A549 (cell line): ENCODE measurements at regions of chr2 and their contacts with region 1.

Region 1: DNA sequence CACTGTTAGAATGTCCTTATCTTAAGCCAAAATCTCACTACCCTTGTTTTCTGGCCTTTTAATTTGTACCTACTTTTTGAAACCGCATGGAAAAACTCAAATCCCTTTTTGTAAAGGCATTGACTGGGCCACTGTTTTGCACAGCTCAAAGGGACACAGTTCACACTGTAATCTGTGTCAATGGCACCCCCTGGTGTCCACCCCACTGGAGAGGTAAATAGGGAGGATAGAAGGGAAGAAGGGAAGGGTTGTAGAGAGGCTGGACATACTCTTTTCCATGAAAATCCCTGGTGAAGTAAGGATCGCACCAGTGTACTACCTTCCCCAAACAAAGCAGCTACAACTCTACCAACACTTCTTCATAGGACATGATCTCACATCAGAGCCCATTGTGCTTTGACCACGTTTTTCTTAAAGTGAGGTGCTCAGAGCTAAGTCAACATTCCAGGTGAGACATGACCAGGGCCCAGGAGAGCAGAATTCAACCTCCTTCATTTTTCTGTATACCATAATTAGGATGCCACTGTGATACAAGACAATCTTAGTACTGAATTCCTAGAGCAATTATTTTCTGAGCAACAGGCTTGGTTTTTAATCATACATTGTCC is 92.4 kb upstream of the RMDN2 start:
- DNase-seq: peak; percentile 84 to 88
- ATAC-seq: peak; percentile 99
- H3K4me3 ChIP-seq: no peak overlapping the region
- H3K27ac ChIP-seq: peak overlapping the region; percentile 41 to 43; a peak in 2 of 6 replicates
- H3K4me1 ChIP-seq: peaks cover 20% of the 10 kb centered on the region
- CTCF ChIP-seq: peak; percentile 99
- EP300 ChIP-seq: no peak
- POLR2A ChIP-seq: no peak
- RAD21 ChIP-seq: peak; percentile 100

Region 2: DNA sequence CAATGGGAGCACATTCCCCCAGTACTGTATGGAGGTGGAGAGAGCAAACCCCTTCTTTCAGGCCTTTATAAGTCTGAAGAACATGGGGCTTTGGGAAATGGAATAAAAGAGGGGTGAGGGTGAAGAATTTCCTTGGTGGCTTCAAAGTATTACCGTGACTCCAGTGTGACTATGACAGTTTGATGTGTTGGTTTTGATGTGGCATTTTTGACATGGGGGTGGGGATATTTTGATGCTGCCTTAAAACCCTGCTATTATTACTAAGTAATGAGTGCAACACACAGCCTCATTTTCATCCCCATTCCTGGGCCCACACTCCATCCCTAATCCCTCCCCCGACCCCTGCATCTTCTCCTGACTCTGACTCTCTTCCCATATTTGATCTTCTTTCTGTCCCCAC is 464.7 kb before region 1 on chr2:
- CTCF ChIA-PET with region 1: no interaction called
- POLR2A ChIA-PET with region 1: no interaction called
- DNase-seq: no peak
- ATAC-seq: no peak
- H3K4me3 ChIP-seq: no peak overlapping the region
- H3K27ac ChIP-seq: no peak overlapping the region
- H3K4me1 ChIP-seq: no peaks in the 10 kb centered on the region
- CTCF ChIP-seq: no peak
- EP300 ChIP-seq: no peak
- POLR2A ChIP-seq: no peak
- RAD21 ChIP-seq: no peak

Region 3: GRCh38 chr2:37402636-37403035 is 430.1 kb before region 1 on chr2:
- CTCF ChIA-PET with region 1: interaction called, 433 read pairs
- POLR2A ChIA-PET with region 1: no interaction called
- DNase-seq: no peak
- ATAC-seq: no peak
- H3K4me3 ChIP-seq: no peak overlapping the region
- H3K27ac ChIP-seq: no peak overlapping the region
- H3K4me1 ChIP-seq: no peaks in the 10 kb centered on the region
- CTCF ChIP-seq: no peak
- EP300 ChIP-seq: no peak
- POLR2A ChIP-seq: no peak
- RAD21 ChIP-seq: no peak

Region 4: DNA sequence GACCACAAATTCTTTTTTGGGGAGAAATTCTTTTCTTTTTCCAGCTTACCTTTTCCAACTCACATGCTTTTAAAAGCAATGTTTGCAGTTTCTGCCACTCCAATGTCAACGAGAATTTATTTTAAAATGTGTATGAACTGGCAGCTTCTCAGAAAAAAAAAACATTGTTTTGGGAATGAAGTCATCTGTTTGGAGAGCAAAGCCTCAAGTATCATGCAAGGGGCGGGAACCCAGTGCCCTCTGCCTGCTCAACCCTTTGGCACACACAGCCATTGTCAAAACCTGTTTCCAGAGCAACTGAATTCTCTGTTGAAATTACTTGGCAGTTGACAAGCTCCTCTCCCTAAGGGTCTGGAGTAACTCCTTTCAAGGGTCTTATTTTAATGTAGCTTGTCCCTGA is 359.7 kb before region 1 on chr2:
- CTCF ChIA-PET with region 1: interaction called, 11 read pairs
- POLR2A ChIA-PET with region 1: no interaction called
- DNase-seq: peak in 1 of 2 experiments; percentile 37
- ATAC-seq: peak; percentile 30 to 52; a peak in 2 of 6 replicates
- H3K4me3 ChIP-seq: no peak overlapping the region
- H3K27ac ChIP-seq: no peak overlapping the region
- H3K4me1 ChIP-seq: peaks cover 11% of the 10 kb centered on the region; the same call in 2 of the 3 replicates
- CTCF ChIP-seq: no peak
- EP300 ChIP-seq: no peak
- POLR2A ChIP-seq: no peak
- RAD21 ChIP-seq: no peak

Region 5: DNA sequence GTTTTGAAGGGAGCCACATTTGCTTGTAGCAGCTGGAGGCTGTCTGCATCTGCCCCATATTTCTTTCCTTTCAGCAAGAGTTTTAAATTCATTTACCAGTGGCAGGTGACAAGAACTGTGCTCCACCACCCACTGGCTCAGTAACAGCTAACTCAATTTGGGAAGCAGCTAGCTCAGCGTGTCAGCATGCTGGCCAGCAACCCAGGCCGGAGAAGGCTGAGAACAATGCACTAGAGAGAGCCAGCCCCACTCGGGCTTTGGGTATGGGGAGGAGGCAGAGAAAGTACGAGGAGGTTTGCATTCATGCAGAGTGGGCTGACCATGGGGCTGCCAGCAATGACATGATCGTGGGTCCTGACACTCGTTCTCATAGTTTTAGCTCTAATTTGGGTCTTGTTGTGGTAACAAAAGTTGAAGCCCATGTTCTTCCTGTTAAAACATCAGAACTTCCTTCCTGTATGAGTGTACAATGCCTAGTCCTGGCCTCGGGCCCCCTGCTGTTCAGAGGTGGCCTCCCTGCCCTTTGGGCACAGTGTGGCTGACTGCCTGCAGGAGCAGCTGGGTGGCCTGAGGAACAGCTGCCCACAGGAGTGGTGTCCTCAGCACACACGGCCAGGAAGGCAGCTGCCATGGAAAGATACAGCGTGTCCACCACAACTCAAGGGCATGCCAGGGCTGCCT is 184.2 kb before region 1 on chr2:
- CTCF ChIA-PET with region 1: interaction called, 11 read pairs
- POLR2A ChIA-PET with region 1: no interaction called
- DNase-seq: no peak
- ATAC-seq: no peak
- H3K4me3 ChIP-seq: no peak overlapping the region
- H3K27ac ChIP-seq: peak overlapping the region in 1 of 2 experiments; percentile 20; a peak in 2 of 6 replicates
- H3K4me1 ChIP-seq: peaks cover 69% of the 10 kb centered on the region
- CTCF ChIP-seq: no peak
- EP300 ChIP-seq: no peak
- POLR2A ChIP-seq: no peak
- RAD21 ChIP-seq: no peak

Region 6: DNA sequence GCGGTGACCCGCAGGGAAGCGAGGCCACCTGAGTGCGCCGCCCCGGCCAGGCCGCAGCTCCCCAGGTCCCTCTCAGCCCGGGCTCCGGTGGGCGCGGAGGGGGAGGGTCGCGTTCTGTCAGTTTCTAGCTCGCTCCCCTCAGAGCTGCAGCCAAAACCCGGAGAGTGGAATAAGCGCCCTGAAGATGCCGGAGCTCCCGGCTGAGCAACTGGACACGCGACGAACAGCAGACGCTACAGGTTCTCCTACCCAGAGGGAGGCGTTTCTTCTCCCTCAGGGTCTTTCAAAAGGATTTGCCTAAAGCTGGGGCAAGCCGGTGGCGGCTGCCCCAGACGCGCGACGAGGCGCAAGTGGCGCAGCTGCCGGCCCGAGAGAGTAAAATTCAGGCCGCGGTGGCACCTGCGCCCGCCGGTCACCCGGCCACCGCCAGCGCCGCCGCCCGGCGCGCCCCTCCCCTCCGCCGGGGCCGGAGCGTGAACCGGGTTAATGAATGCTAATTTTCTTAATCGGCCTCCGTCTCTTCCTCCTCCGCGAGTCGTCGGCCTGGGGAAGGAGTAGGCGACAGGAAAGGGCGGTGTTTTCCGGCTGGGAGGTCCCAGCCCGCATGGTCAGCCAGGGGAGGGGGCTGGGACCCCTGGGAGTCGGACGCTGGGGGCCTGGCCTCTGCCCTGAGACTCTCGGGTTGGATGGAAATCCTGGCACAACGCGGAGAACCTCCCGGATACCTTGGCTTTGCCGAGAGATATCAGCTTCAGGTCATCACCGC is 160.4 kb before region 1 on chr2:
- CTCF ChIA-PET with region 1: interaction called, 34 read pairs
- POLR2A ChIA-PET with region 1: interaction called, 12 read pairs
- DNase-seq: peak; percentile 91 to 94
- ATAC-seq: peak; percentile 67 to 72
- H3K4me3 ChIP-seq: peak overlapping the region; percentile 75
- H3K27ac ChIP-seq: peak overlapping the region; percentile 92 to 98
- H3K4me1 ChIP-seq: peaks cover 57% of the 10 kb centered on the region
- CTCF ChIP-seq: no peak
- EP300 ChIP-seq: no peak
- POLR2A ChIP-seq: no peak; the same call in 1 of the 2 replicates
- RAD21 ChIP-seq: peak; percentile 17 to 32; a peak in 1 of 5 replicates

Region 7: GRCh38 chr2:37721201-37721560 is 111.5 kb before region 1 on chr2:
- CTCF ChIA-PET with region 1: no interaction called
- POLR2A ChIA-PET with region 1: no interaction called
- DNase-seq: no peak
- ATAC-seq: no peak
- H3K4me3 ChIP-seq: no peak overlapping the region
- H3K27ac ChIP-seq: no peak overlapping the region
- H3K4me1 ChIP-seq: no peaks in the 10 kb centered on the region
- CTCF ChIP-seq: no peak
- EP300 ChIP-seq: no peak
- POLR2A ChIP-seq: no peak
- RAD21 ChIP-seq: no peak

Region 8: GRCh38 chr2:37819186-37819585 is 13.5 kb before region 1 on chr2:
- CTCF ChIA-PET with region 1: interaction called, 18 read pairs
- POLR2A ChIA-PET with region 1: no interaction called
- DNase-seq: no peak
- ATAC-seq: no peak
- H3K4me3 ChIP-seq: no peak overlapping the region
- H3K27ac ChIP-seq: no peak overlapping the region
- H3K4me1 ChIP-seq: peaks cover 4% of the 10 kb centered on the region; the same call in 1 of the 3 replicates
- CTCF ChIP-seq: no peak
- EP300 ChIP-seq: no peak
- POLR2A ChIP-seq: no peak
- RAD21 ChIP-seq: no peak